ENCODE measurements at regions of chr7 and their contacts with region 1.

Region 1: DNA sequence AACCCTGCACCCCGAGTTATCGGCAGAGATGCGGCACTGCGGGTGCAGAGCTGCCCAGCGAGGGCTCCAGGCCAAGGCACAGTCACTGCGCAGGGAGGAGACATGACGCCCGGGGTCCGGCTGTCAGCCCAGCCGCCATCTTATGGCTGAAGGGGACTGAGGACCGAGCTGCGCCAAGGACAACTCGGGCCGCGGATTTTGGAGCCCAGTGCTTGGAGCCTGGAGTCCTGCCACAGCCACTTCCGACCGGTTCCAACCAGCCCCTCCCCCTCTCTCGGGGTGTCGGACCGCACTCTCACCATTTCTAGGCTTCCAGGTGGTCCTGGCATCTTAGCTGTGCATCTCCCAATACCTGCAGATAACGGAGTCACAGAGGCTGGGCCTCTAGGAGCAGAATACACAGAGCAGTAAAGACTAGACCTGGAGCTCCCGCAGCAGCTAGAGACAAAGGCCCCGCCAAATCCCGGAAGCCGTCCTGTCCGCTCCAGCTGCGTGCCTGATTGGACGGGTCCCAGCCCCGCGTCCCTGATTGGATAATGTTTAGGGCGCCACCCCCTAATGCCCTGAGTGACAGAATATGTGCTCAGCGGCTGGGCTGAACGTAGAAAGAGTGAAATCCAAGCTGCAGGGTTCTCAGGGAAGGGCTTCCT is at the start of gene ZNF680:
- DNase-seq: peak; percentile 82

Region 2: DNA sequence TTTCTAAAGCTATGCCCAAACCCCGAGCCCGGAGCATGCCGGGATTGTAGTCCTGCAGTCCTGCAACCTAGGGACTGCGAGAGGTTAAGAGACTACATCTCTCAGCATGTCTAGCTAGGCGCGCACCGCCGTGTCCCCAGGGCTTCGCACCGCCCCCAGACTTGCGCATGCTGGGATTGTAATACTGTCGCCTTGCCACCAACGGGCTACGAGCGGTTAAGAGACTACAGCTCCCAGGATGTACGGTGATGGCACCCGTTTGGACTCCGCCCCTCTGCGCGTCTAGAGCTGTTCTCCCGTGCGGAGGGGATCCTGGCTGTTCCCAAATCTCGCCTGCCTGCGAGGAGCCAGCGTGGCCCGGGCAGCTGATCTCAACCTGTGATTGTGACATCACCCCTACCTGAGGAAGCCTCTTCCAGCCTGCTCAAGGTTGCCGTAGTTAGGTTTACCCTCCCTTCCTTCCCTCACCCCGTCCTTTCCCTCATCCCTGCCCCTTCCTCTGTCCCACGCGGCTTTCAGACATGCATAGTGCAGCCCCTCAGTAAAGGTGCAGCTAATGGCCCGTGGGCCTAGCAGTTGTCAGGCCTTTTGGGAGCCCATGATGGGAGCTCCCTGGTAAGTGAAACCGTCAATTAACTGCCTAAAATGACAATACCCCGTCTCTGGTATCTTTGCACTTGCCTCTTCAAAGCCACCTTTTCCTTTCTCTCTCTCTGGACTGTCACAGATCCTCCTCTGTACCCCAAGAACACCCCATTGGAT is 255.3 kb before region 1 on chr7:
- CTCF ChIA-PET with region 1: no interaction called
- POLR2A ChIA-PET with region 1: interaction called, 10 read pairs
- DNase-seq: peak; percentile 78

Region 3: DNA sequence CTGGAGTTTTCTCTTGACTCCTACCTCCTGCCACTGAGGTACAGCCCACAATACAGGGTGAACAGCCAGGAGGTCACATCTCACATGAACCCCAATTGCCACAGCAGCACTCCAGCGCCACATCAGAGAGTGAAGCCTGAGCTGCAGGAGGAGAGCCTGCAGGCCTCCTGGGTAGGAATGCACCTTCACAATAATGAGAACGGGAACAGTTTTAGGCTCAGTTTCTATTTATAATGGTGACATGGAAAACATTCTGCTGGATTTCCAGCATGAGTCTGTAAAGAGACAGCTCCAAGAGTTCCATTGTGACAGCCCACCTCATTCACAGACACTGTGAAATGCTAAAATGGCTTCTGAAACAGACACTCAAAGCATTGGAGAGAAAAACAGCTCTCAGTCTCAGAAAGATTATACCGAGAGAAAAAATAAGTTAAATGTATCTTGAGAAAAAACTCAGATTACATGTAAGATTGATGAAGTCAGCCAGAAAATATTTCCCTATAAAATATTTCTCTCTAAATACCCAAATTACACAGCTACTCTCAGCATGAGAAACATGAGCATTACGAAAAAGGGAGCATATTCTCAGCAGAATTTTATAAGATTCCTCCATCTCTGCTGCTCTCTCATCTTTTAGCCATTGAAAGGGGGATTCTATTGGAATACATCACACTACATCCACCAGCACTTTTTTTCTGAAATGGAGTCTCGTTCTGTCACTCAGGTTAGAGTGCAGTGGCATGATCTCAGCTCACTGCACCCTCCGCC is 11.2 kb before region 1 on chr7:
- CTCF ChIA-PET with region 1: no interaction called
- POLR2A ChIA-PET with region 1: interaction called, 10 read pairs
- DNase-seq: no peak

Region 4: GRCh38 chr7:64611406-64612116 is 48.8 kb after region 1 on chr7:
- CTCF ChIA-PET with region 1: no interaction called
- POLR2A ChIA-PET with region 1: no interaction called
- DNase-seq: no peak

Measured in HEK293T (cell line).